ENCODE measurements at regions of chr22 and their contacts with region 1.

Region 1: DNA sequence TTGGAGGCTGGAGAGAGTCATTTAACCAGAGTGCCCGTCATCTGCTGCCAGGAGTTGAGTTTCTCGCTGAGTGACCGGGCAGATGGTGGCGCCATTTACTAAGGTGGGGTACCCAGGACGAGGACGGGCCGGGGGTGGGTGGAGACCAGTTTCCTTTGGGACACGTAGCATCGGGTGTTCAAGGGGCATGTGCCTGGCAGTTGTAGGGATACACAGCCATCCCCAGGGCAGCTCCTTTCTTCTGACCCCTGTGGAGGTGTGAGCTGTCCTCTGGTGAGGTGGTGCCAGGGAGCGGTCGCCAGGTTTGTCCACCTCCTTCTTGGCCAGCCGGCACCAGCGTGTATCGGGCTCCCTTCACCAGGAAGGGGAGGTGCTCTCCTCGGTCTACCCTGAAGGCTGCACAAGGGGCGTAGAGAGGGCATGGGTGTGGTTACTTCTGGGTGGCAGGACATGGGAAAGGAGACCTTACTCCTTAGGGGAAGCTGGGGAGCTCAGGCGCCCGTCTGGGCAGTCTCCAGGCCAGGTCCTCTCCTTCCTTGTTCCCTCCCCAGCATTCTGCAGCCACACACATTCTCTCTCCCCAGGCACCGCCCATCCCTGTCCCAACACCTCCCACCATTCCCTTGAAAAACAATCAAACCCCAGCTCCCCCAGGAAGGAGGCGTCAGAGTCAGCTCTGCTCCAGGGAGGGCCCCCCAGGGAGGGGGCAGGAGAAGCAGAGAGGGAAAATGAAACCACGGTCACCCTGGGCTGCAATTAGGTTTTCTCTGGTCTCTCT is 10.3 kb upstream of the MB start:
- DNase-seq: peak; percentile 75 to 86
- ATAC-seq: peak; percentile 1 to 35 (median 18)
- H3K4me3 ChIP-seq: peak overlapping the region; percentile 65
- H3K27ac ChIP-seq: peak overlapping the region; percentile 68
- H3K4me1 ChIP-seq: peaks cover 16% of the 10 kb centered on the region
- H3K27me3 ChIP-seq: no peaks in the 10 kb centered on the region
- CTCF ChIP-seq: peak; percentile 33

Region 2: GRCh38 chr22:35430897-35431322 is 196.5 kb before region 1 on chr22:
- intact Hi-C with region 1: loop called (anchors 2 kb)
- DNase-seq: peak; percentile 88 to 92
- ATAC-seq: peak; percentile 95 to 98 (median 96)
- H3K4me3 ChIP-seq: no peak overlapping the region
- H3K27ac ChIP-seq: no peak overlapping the region
- H3K4me1 ChIP-seq: peaks cover 24% of the 10 kb centered on the region
- H3K27me3 ChIP-seq: no peaks in the 10 kb centered on the region
- CTCF ChIP-seq: peak; percentile 96

Region 3: DNA sequence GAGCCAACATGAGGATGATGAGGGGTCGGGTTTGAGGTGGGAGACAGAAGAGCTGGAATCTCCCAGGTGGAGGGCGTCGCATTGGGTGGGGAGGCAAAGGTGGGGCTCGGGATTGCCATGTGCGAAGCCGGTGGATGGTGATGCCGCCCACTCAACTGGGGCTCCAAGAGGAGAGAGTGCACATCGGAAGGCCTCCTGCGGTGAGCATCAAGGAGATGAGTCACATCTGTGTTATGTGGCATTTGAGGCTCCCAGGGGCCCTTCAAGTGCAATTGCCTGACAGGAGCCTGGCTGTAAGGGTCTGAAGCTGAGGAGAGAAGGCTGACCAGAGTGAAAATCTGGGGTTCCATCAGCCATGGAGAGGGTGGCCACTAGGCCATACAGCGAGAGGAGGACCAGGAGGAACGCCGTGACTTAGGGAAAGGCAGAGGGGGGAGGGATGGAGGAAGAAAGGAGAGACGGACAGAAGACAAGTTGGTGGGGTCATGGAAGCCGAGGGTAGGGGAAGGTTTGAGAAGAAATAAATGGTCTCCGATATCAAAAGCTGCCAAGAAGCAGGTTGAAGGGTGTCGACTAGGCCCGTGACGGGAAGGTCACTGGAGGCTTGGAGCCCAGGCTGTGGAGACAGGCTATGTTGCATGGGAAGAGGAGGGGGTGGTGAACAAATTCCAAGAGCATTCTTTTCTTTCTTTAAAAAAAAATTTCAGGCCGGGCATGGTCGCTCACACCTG is 65.5 kb before region 1 on chr22:
- intact Hi-C with region 1: no loop called
- DNase-seq: no peak
- ATAC-seq: no peak
- H3K4me3 ChIP-seq: no peak overlapping the region
- H3K27ac ChIP-seq: no peak overlapping the region
- H3K4me1 ChIP-seq: no peaks in the 10 kb centered on the region
- H3K27me3 ChIP-seq: no peaks in the 10 kb centered on the region
- CTCF ChIP-seq: no peak

Region 4: DNA sequence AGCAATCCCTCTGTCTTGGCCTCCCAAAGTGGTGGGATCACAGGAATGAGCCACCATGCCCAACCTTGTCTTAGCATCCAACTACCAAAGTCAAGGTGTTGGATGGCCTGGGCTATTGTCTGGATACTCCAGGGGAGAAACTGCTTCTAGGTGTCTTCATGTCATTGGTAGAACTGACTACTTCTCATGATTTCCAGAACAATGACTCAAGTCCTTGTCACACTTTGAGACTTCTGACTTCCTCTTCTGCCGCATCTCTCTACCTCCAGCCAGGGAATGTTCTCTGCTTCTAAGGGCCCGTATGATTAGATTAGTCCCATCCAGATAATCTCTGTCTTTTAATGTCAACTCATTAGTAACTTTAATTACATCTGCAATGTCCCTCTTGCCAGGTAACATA is 51.4 kb after region 1 on chr22:
- intact Hi-C with region 1: loop called in 1 of 2 experiments (anchors 5 kb)
- DNase-seq: no peak
- ATAC-seq: no peak
- H3K4me3 ChIP-seq: no peak overlapping the region
- H3K27ac ChIP-seq: peak overlapping the region; percentile 67
- H3K4me1 ChIP-seq: peaks cover 11% of the 10 kb centered on the region
- H3K27me3 ChIP-seq: no peaks in the 10 kb centered on the region
- CTCF ChIP-seq: no peak

Region 5: GRCh38 chr22:35728639-35729308 is 101.3 kb after region 1 on chr22:
- intact Hi-C with region 1: loop called (anchors 5 kb)
- DNase-seq: no peak
- ATAC-seq: no peak
- H3K4me3 ChIP-seq: no peak overlapping the region
- H3K27ac ChIP-seq: no peak overlapping the region
- H3K4me1 ChIP-seq: peaks cover under 1% of the 10 kb centered on the region
- H3K27me3 ChIP-seq: no peaks in the 10 kb centered on the region
- CTCF ChIP-seq: no peak

Region 6: GRCh38 chr22:35840302-35840739 is 212.9 kb after region 1 on chr22:
- intact Hi-C with region 1: loop called in 1 of 2 experiments (anchors 10 kb)
- DNase-seq: peak; percentile 87 to 92
- ATAC-seq: peak; percentile 86 to 91 (median 90)
- H3K4me3 ChIP-seq: peak overlapping the region; percentile 67
- H3K27ac ChIP-seq: peak overlapping the region; percentile 85
- H3K4me1 ChIP-seq: peaks cover 73% of the 10 kb centered on the region
- H3K27me3 ChIP-seq: no peaks in the 10 kb centered on the region
- CTCF ChIP-seq: no peak

Region 7: DNA sequence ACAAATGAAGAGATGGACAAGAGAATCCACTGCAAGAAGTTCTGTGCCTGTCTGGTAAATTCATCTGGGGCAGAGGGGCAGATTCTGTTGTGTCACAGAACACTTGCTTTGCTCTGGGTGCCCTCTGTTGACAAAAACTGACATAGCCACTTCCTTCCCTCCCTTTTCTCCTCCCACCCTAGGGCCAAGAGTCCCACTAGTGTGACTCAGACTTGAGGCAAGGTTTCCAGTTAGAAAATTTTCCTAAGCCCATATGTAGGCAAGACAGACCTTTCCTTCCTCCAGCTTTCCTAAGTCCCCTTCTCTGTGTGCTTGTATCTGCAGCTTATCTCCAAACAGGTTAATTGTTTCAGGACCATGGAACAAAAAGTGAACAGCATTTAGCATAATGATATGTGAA is 294.3 kb after region 1 on chr22:
- intact Hi-C with region 1: loop called (anchors 1 to 5 kb)
- DNase-seq: peak; percentile 30 to 58
- ATAC-seq: peak; percentile 92 to 96 (median 94)
- H3K4me3 ChIP-seq: no peak overlapping the region
- H3K27ac ChIP-seq: peak overlapping the region; percentile 75
- H3K4me1 ChIP-seq: peaks cover 47% of the 10 kb centered on the region
- H3K27me3 ChIP-seq: no peaks in the 10 kb centered on the region
- CTCF ChIP-seq: peak; percentile 62

Measured in psoas muscle (tissue), 8 donors.